Lower leg skin (tissue), 4 donors: ENCODE measurements at regions of chr3 and their contacts with region 1.

Region 1: GRCh38 chr3:152910211-152910610 is 75.3 kb downstream of the P2RY1 start:
- DNase-seq: no peak
- H3K4me3 ChIP-seq: no peak overlapping the region
- CTCF ChIP-seq: no peak
- POLR2A ChIP-seq: no peak

Region 2: GRCh38 chr3:152298393-152299242 is 611.6 kb before region 1 on chr3:
- intact Hi-C with region 1: loop called (anchors 10 kb)
- DNase-seq: peak in 1 of 2 donors; percentile 87
- H3K4me3 ChIP-seq: no peak overlapping the region
- CTCF ChIP-seq: no peak
- POLR2A ChIP-seq: no peak

Region 3: GRCh38 chr3:153330901-153331300 is 420.7 kb after region 1 on chr3:
- intact Hi-C with region 1: no loop called
- DNase-seq: no peak
- H3K4me3 ChIP-seq: no peak overlapping the region
- CTCF ChIP-seq: no peak
- POLR2A ChIP-seq: no peak